Ascending aorta (tissue), 2 donors: ENCODE measurements at regions of chr22 and their contacts with region 1.

Region 1: GRCh38 chr22:44363272-44363979 is 50.7 kb upstream of the SHISAL1 start:
- DNase-seq: peak; percentile 72 to 98
- H3K4me3 ChIP-seq: peak overlapping the region in 1 of 2 donors; percentile 17
- H3K27ac ChIP-seq: peak overlapping the region; percentile 78 to 89
- H3K4me1 ChIP-seq: peaks cover 22 to 51% of the 10 kb centered on the region in 2 donors
- H3K27me3 ChIP-seq: no peaks in the 10 kb centered on the region
- CTCF ChIP-seq: no peak

Region 2: GRCh38 chr22:43812149-43812842 is 551.1 kb before region 1 on chr22 and contains the start of gene EFCAB6:
- intact Hi-C with region 1: loop called (anchors 5 kb)
- DNase-seq: peak; percentile 65 to 94
- H3K4me3 ChIP-seq: peak within 1 kb of the TSS; percentile 82 to 89
- H3K27ac ChIP-seq: peak within 1 kb of the TSS; percentile 63 to 81
- H3K4me1 ChIP-seq: peaks cover 3 to 7% of the 10 kb centered on the region in 2 donors
- H3K27me3 ChIP-seq: no peaks in the 10 kb centered on the region
- CTCF ChIP-seq: no peak
- total RNA-seq, gene EFCAB6: 8.6 TPM

Region 3: DNA sequence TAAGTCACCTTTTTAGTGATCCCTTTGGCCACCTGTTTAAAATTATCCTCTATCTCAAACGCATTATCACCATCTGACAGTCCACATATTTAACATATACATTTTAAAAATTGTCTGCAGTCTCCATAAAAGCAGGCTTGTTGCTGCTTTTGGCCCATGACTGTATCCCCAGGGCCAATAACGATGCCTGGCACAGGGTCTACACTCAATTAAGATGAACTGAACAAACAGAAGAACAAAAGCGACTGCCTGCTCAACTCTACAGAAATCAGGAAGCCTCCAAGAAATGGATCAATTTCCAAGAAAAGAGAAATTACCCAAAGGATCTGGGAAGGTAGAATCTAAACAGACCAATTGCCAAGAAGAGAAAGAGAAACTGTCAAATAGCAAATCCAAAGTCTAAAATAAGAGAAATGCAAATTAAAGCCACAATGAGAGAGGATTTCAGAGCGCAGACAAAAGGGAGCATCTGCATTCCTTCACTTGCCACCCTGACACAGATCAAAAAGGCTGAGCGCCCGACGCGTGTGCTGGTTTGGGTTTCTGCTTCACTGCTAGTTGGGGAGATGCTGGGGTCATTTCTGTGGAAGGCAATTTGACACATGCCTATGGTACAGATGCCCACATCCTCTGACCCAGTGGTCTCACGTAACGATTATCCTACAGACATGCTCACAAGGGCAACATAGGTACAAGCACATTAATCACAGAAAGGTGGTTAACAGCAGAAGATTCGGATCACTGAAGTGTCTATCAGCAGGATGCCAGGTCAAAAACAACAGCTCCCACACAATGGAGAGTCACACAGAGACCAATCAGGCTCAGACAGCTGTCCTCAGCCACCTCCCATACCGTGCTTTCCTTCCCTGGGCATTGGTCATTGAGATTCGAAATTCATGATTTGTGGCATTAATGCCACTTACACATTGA is 106.6 kb before region 1 on chr22:
- intact Hi-C with region 1: no loop called
- DNase-seq: peak in 1 of 2 donors; percentile 16
- H3K4me3 ChIP-seq: no peak overlapping the region
- H3K27ac ChIP-seq: no peak overlapping the region
- H3K4me1 ChIP-seq: no peaks in the 10 kb centered on the region
- H3K27me3 ChIP-seq: no peaks in the 10 kb centered on the region
- CTCF ChIP-seq: no peak

Region 4: DNA sequence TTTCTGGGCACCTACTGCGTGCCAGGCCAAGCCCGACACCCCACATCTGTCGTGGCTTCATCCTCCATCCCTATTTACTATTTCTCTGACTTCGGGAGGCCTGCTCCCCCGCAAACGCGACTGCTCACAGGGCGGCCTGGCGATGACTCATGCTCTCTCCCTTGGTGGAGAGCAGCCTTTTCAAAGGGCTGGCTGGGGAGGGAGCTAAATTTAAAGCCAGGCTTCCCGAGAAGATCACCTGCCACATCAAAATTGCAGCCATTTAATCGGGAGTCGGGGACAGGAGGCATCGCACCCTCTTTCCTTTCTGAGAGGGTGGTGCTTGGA is 25.8 kb before region 1 on chr22:
- intact Hi-C with region 1: loop called (anchors 1 kb)
- DNase-seq: peak in 1 of 2 donors; percentile 72
- H3K4me3 ChIP-seq: no peak overlapping the region
- H3K27ac ChIP-seq: no peak overlapping the region
- H3K4me1 ChIP-seq: peaks cover 13 to 29% of the 10 kb centered on the region in 2 donors
- H3K27me3 ChIP-seq: no peaks in the 10 kb centered on the region
- CTCF ChIP-seq: no peak

Region 5: GRCh38 chr22:44422746-44423380 is 59.4 kb after region 1 on chr22:
- intact Hi-C with region 1: no loop called
- DNase-seq: peak in 1 of 2 donors; percentile 35
- H3K4me3 ChIP-seq: no peak overlapping the region
- H3K27ac ChIP-seq: no peak overlapping the region
- H3K4me1 ChIP-seq: no peaks in the 10 kb centered on the region
- H3K27me3 ChIP-seq: no peaks in the 10 kb centered on the region
- CTCF ChIP-seq: no peak

Region 6: GRCh38 chr22:44448271-44448830 is 84.9 kb after region 1 on chr22:
- intact Hi-C with region 1: loop called (anchors 1 kb)
- DNase-seq: peak; percentile 38 to 85
- H3K4me3 ChIP-seq: no peak overlapping the region
- H3K27ac ChIP-seq: peak overlapping the region; percentile 10 to 68
- H3K4me1 ChIP-seq: peaks cover 3 to 8% of the 10 kb centered on the region in 2 donors
- H3K27me3 ChIP-seq: no peaks in the 10 kb centered on the region
- CTCF ChIP-seq: no peak

Region 7: DNA sequence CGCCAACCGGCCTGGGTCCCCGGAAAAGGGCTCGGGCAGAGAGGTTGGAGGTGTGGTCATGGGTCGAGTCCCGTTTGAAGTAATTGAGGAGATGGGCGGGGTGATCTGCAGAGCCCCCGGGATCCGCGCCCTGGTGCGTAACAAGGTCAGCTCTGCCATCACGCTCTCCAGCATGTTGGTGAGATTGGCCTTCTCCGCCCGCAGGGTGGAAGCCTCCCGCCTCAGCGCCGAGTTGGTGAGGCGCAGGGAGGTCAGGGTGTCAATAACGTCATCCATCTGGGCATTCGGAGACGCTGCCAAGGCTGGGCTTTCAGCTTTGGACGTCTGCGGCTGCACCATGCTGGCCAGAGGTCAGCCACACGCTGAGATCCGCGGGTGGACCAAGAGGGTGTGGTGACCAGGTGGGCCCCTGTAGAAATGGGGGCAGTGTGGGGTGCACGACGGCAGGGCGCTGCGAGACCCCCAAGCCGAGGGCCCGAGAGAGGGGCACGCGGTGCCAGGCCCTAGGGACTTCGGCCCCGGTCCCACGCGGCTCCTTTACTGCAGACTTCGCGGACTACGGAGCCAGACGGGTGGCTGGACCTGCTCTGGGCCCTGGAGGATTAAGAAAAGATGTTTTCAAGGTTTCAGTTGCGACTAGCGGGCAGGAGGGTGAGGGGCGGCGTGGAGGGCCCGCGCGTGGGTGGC is 133.9 kb after region 1 on chr22:
- intact Hi-C with region 1: loop called (anchors 2 kb)
- DNase-seq: no peak
- H3K4me3 ChIP-seq: peak overlapping the region; percentile 97 to 100
- H3K27ac ChIP-seq: peak overlapping the region; percentile 81 to 88
- H3K4me1 ChIP-seq: peaks cover 4 to 10% of the 10 kb centered on the region in 2 donors
- H3K27me3 ChIP-seq: no peaks in the 10 kb centered on the region
- CTCF ChIP-seq: no peak

Region 8: DNA sequence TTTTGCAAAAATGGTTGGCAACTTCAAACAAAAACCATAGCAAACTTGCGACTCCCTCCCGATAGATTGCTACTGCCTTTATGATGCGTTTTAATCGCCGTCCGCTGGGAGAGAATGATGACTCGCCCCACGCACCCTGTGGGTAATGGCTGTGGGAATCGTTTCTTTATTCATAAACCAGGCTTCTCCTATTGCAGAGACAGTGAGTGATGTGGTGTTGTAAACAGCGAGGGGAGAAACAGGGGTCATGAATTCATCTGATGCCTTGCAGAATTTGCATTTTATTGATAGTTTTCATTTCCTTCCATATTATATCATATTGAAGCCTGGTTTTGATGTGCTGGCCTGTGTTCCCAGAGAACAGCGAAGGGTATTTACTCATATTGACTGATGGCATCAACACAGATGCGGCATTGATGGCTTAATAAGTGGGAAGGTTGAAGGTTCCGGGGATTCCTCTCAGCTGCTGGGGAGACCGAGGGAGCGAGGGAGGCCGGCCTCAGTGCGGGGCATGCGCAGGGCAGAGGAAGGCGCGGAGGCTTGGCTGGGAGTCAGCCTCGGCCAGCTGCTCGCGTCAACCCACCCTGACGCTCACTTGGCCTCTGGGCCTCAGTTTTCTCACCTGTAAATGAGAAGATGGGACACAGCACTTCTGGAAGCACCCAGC is 430.2 kb after region 1 on chr22:
- intact Hi-C with region 1: no loop called
- DNase-seq: no peak
- H3K4me3 ChIP-seq: no peak overlapping the region
- H3K27ac ChIP-seq: no peak overlapping the region
- H3K4me1 ChIP-seq: no peaks in the 10 kb centered on the region
- H3K27me3 ChIP-seq: no peaks in the 10 kb centered on the region
- CTCF ChIP-seq: no peak

Region 9: GRCh38 chr22:45336971-45337431 is 973.6 kb after region 1 on chr22:
- intact Hi-C with region 1: loop called (anchors 10 kb)
- DNase-seq: peak; percentile 60 to 87
- H3K4me3 ChIP-seq: peak overlapping the region in 1 of 2 donors; percentile 50
- H3K27ac ChIP-seq: peak overlapping the region; percentile 54 to 73
- H3K4me1 ChIP-seq: peaks cover 12 to 30% of the 10 kb centered on the region in 2 donors
- H3K27me3 ChIP-seq: no peaks in the 10 kb centered on the region
- CTCF ChIP-seq: no peak